ENCODE measurements at regions of chr2 and their contacts with region 1.

Region 1: GRCh38 chr2:53220969-53221368 is 546.6 kb upstream of the CHAC2 start:
- DNase-seq: no peak
- ATAC-seq: no peak
- H3K4me3 ChIP-seq: no peak overlapping the region
- H3K27ac ChIP-seq: no peak overlapping the region
- H3K4me1 ChIP-seq: no peaks in the 10 kb centered on the region
- H3K27me3 ChIP-seq: no peaks in the 10 kb centered on the region
- CTCF ChIP-seq: no peak
- EP300 ChIP-seq: no peak
- POLR2A ChIP-seq: no peak
- RAD21 ChIP-seq: no peak

Region 2: DNA sequence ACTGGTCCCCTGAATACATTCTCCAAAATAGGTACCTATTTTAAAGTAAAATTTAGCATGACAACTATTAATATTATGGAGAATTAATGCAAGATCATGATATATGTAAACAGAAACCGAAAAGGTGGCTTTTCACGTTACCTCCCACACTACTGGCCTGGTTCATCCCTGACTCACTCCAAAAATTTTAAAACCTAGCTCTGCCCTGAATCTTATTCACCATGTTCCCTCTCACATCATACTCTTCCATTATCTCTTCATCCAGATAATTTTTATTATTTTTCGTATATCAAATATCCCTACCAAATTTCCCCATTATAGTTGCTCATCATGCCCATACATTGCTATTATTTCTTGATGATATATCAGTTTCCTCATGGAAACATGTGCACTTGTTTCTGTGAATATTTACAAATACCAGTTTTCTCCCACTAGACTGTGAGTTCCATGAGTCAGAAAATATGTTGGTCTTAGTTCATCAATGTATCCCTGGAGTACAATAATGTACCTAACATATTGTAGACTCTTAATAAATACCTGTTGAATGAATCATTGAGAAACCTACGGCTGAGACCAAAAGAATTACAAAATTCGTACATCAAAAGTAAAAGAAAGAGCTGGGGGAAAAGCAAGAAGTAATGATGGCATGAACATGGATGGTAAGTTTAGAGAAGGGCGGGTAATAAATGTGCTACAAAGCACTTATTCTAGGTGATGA is 186.6 kb after region 1 on chr2:
- CTCF ChIA-PET with region 1: no interaction called
- POLR2A ChIA-PET with region 1: no interaction called
- in situ Hi-C with region 1: no loop called
- intact Hi-C with region 1: no loop called
- DNase-seq: no peak
- ATAC-seq: no peak
- H3K4me3 ChIP-seq: no peak overlapping the region
- H3K27ac ChIP-seq: no peak overlapping the region
- H3K4me1 ChIP-seq: no peaks in the 10 kb centered on the region
- H3K27me3 ChIP-seq: no peaks in the 10 kb centered on the region
- CTCF ChIP-seq: no peak
- EP300 ChIP-seq: no peak
- POLR2A ChIP-seq: no peak
- RAD21 ChIP-seq: no peak

Region 3: GRCh38 chr2:54240515-54241469 is 1019.8 kb after region 1 on chr2:
- CTCF ChIA-PET with region 1: no interaction called
- POLR2A ChIA-PET with region 1: no interaction called
- in situ Hi-C with region 1: no loop called
- intact Hi-C with region 1: no loop called
- DNase-seq: no peak
- ATAC-seq: no peak
- H3K4me3 ChIP-seq: no peak overlapping the region
- H3K27ac ChIP-seq: no peak overlapping the region
- H3K4me1 ChIP-seq: peaks cover 4% of the 10 kb centered on the region
- H3K27me3 ChIP-seq: no peaks in the 10 kb centered on the region
- CTCF ChIP-seq: no peak
- EP300 ChIP-seq: no peak
- POLR2A ChIP-seq: no peak
- RAD21 ChIP-seq: no peak

Region 4: DNA sequence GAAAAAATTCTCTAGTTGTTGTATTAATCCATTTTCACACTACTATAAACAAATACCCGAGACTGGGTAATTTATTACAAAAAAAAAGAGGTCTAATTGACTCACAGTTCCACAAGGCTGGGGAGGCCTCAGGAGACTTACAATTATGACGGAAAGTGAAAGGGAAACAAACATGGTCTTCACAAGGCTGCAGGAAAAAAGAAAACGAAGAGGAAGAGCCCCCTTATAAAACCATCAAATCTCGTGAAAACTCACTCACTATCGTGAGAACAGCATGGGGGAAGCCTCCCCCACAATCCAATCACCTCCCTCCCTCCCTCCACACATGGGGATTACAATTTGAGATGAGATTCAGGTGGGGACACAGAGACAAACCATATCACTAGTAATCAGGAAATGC is 1173.4 kb after region 1 on chr2:
- CTCF ChIA-PET with region 1: no interaction called
- POLR2A ChIA-PET with region 1: no interaction called
- in situ Hi-C with region 1: no loop called
- intact Hi-C with region 1: loop called (anchors 10 kb)
- DNase-seq: no peak
- ATAC-seq: no peak; the same call in 2 of the 3 replicates
- H3K4me3 ChIP-seq: peak overlapping the region in 2 of 3 experiments; percentile 18 to 33; a peak in 3 of 6 replicates
- H3K27ac ChIP-seq: no peak overlapping the region
- H3K4me1 ChIP-seq: peaks cover 11% of the 10 kb centered on the region; the same call in 1 of the 2 replicates
- H3K27me3 ChIP-seq: peaks cover 5 to 19% of the 10 kb centered on the region in 2 experiments; a peak in 4 of 5 replicates
- CTCF ChIP-seq: no peak
- EP300 ChIP-seq: no peak
- POLR2A ChIP-seq: no peak
- RAD21 ChIP-seq: no peak

Measured in HepG2 (cell line).